Activated CD8-positive, alpha-beta T cell treated with anti-CD3 and anti-CD28 coated beads for 36 hours (primary cell): ENCODE measurements at regions of chr11 and their contacts with region 1.

Region 1: GRCh38 chr11:61639816-61640443 is 40.3 kb upstream of the DAGLA start:
- DNase-seq: peak; percentile 12
- ATAC-seq: no peak
- H3K4me3 Mint-ChIP-seq: no peak overlapping the region
- H3K27ac Mint-ChIP-seq: no peak overlapping the region
- H3K4me1 Mint-ChIP-seq: no peaks in the 10 kb centered on the region
- H3K27me3 Mint-ChIP-seq: no peaks in the 10 kb centered on the region
- CTCF ChIP-seq: no peak

Region 2: DNA sequence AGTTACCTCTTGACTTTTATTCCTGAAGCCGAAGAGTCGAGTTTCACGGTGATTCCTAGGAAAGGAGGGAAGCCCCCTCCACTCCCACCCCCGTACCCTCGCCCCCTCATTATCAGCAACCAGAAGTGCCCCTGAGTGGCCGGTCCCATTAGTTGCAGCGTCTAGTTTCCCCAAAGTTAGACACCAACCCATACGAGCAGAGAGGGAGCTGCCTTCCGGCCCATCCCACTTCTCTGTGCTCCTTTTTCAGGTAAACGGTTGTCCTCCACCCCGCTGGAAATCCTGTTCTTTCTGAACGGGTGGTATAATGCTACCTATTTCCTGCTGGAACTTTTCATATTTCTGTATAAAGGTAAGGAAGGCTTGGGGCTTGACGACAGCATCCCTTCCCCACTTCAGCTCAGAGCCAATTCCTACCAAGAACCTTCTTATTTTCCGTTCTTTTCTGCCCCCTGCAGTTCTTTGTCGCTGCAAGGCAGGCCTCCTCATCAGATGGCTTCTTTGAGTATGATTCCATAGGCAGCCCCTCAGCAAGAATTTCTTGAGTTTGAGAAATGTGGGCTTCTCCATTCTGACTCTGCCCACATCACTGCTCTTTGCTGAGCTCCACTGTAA is 246.8 kb before region 1 on chr11:
- CTCF ChIA-PET with region 1: no interaction called
- POLR2A ChIA-PET with region 1: no interaction called
- intact Hi-C with region 1: no loop called
- DNase-seq: peak; percentile 35
- ATAC-seq: peak; percentile 41
- H3K4me3 Mint-ChIP-seq: peak overlapping the region; percentile 80
- H3K27ac Mint-ChIP-seq: peak overlapping the region; percentile 88
- H3K4me1 Mint-ChIP-seq: peaks cover 24% of the 10 kb centered on the region
- H3K27me3 Mint-ChIP-seq: no peaks in the 10 kb centered on the region
- CTCF ChIP-seq: peak; percentile 28

Region 3: GRCh38 chr11:61477727-61478148 is 162.2 kb before region 1 on chr11:
- CTCF ChIA-PET with region 1: interaction called, 17 read pairs
- POLR2A ChIA-PET with region 1: no interaction called
- intact Hi-C with region 1: no loop called
- DNase-seq: peak; percentile 70
- ATAC-seq: peak; percentile 64
- H3K4me3 Mint-ChIP-seq: no peak overlapping the region
- H3K27ac Mint-ChIP-seq: no peak overlapping the region
- H3K4me1 Mint-ChIP-seq: peaks cover 15% of the 10 kb centered on the region
- H3K27me3 Mint-ChIP-seq: peaks cover 2% of the 10 kb centered on the region
- CTCF ChIP-seq: peak; percentile 94

Region 4: GRCh38 chr11:61532139-61533038 is 107.5 kb before region 1 on chr11:
- CTCF ChIA-PET with region 1: interaction called, 11 read pairs
- POLR2A ChIA-PET with region 1: no interaction called
- intact Hi-C with region 1: loop called (anchors 10 kb)
- DNase-seq: peak; percentile 62
- ATAC-seq: peak; percentile 94
- H3K4me3 Mint-ChIP-seq: no peak overlapping the region
- H3K27ac Mint-ChIP-seq: no peak overlapping the region
- H3K4me1 Mint-ChIP-seq: no peaks in the 10 kb centered on the region
- H3K27me3 Mint-ChIP-seq: peaks cover 14% of the 10 kb centered on the region
- CTCF ChIP-seq: peak; percentile 84

Region 5: GRCh38 chr11:61616434-61616833 is 23.5 kb before region 1 on chr11:
- CTCF ChIA-PET with region 1: interaction called, 11 read pairs
- POLR2A ChIA-PET with region 1: no interaction called
- intact Hi-C with region 1: no loop called
- DNase-seq: no peak
- ATAC-seq: no peak
- H3K4me3 Mint-ChIP-seq: no peak overlapping the region
- H3K27ac Mint-ChIP-seq: no peak overlapping the region
- H3K4me1 Mint-ChIP-seq: no peaks in the 10 kb centered on the region
- H3K27me3 Mint-ChIP-seq: peaks cover 8% of the 10 kb centered on the region
- CTCF ChIP-seq: no peak

Region 6: GRCh38 chr11:61650781-61651571 is 11.0 kb after region 1 on chr11:
- CTCF ChIA-PET with region 1: interaction called, 30 read pairs
- POLR2A ChIA-PET with region 1: no interaction called
- intact Hi-C with region 1: no loop called
- DNase-seq: no peak
- ATAC-seq: no peak
- H3K4me3 Mint-ChIP-seq: no peak overlapping the region
- H3K27ac Mint-ChIP-seq: no peak overlapping the region
- H3K4me1 Mint-ChIP-seq: no peaks in the 10 kb centered on the region
- H3K27me3 Mint-ChIP-seq: peaks cover 10% of the 10 kb centered on the region
- CTCF ChIP-seq: no peak

Region 7: GRCh38 chr11:61733120-61733978 is 93.4 kb after region 1 on chr11:
- CTCF ChIA-PET with region 1: interaction called, 12 read pairs
- POLR2A ChIA-PET with region 1: no interaction called
- intact Hi-C with region 1: no loop called
- DNase-seq: peak; percentile 90
- ATAC-seq: peak; percentile 97
- H3K4me3 Mint-ChIP-seq: no peak overlapping the region
- H3K27ac Mint-ChIP-seq: no peak overlapping the region
- H3K4me1 Mint-ChIP-seq: peaks cover 5% of the 10 kb centered on the region
- H3K27me3 Mint-ChIP-seq: no peaks in the 10 kb centered on the region
- CTCF ChIP-seq: peak; percentile 92